ENCODE measurements at regions of chr19 and their contacts with region 1.

Region 1: GRCh38 chr19:48363810-48364563 is at the starts of genes SYNGR4 and TMEM143:
- DNase-seq: peak; percentile 98
- H3K4me3 ChIP-seq: peak within 1 kb of the TSS; percentile 40 to 43
- H3K27ac ChIP-seq: peak within 1 kb of the TSS; percentile 90 to 92
- H3K4me1 ChIP-seq: peaks cover 3% of the 10 kb centered on the region
- H3K27me3 ChIP-seq: no peaks in the 10 kb centered on the region
- CTCF ChIP-seq: peak in 1 of 4 experiments; percentile 30
- POLR2A ChIP-seq: peak; percentile 43
- total RNA-seq, gene SYNGR4: 2.8 TPM in 1 of 2 donors, not detected in the other
- total RNA-seq, gene TMEM143: 4.6 to 14.9 TPM

Region 2: DNA sequence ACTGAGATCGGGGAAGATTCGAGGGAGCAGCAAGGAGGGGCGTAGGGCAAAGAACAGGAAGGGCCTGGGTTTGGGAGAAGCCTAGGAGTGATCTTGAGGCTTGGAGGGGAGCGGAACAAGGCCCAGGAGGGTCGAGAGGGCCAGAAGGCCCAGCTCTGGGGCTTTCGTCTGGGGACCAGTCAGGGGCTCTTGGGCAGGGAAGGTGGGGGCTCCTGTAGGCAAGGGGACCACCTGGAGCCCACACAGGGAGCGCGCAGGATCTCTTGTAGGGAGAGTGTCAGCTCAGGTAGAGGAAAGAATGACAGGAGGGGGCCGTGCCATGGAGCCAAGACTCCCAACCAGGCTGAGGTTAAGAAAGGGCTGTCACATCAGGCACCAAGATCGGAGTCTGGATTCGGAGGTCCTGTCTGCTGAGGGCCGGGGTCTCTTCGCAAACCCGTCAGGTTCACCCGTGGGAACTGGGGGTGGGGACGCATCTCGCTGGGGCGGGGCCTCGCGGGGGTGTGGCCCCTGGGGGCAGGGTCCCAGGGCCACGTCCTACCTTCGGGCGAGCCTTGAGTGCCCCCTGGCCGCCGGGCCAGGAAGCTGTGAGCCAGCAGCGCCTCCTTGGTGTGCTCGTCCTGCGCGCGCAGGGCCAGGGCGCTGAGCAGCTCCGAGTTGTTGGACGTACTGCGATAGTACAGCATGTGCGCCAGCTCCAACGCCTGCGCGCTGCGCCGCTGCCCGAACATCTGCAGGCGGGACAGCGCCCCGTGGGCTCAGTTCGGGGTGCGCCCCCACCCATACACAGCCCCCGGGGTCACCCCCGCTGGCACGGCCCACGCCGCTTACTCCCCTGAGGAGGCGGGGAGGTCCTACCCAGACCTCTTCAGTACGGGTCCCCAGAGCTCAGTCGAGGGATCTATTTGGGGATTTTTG is 30.3 kb before region 1 on chr19:
- intact Hi-C with region 1: loop called (anchors 2 kb)
- DNase-seq: peak; percentile 86
- H3K4me3 ChIP-seq: peak overlapping the region; percentile 23 to 35
- H3K27ac ChIP-seq: peak overlapping the region; percentile 89 to 97
- H3K4me1 ChIP-seq: peaks cover 6% of the 10 kb centered on the region
- H3K27me3 ChIP-seq: no peaks in the 10 kb centered on the region
- CTCF ChIP-seq: peak; percentile 58 to 95 (median 84)
- POLR2A ChIP-seq: no peak

Region 3: DNA sequence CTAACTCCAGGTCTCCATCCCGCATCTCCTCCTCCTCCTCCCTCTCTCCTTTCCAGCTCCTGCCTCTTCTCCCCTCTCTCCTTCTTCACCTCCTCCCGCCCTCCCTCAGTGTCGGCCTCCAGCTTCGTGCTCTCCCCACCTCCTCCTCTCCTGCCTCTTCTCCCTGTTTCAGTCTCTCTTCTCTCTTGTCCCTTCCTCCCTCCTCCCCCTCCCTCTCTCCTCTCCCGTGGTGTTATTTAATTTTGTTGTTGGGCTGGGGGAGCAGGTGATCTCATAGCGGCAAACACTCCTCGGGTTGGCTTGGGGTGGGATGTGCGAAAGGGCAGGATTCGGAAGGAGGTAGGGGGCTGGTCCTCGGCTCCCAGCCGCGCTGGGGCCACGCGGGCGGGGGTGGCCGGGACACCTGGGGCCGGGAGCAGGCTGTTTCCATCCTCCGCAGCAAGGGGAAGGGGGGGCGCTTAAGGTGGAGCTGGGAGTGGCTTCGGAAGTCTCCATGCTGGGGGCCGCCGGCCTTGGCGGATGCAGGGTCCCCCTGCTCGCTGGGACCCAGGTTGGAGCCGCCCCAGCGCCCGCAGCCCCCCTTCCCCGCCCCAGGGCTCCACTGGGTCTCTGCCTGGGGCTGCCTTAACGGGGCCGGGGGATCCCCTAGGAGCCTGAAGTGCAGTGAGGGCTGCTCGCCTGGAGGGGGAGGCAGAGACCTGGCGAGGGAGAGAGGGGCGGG is 282.2 kb after region 1 on chr19 and contains the start of gene CA11:
- intact Hi-C with region 1: no loop called
- DNase-seq: peak; percentile 78
- H3K4me3 ChIP-seq: peak within 1 kb of the TSS; percentile 41 to 44
- H3K27ac ChIP-seq: peak within 1 kb of the TSS; percentile 90 to 93
- H3K4me1 ChIP-seq: peaks cover 7% of the 10 kb centered on the region
- H3K27me3 ChIP-seq: no peaks in the 10 kb centered on the region
- CTCF ChIP-seq: peak; percentile 85 to 95 (median 88)
- POLR2A ChIP-seq: peak; percentile 49
- total RNA-seq, gene CA11: 7.0 to 11.2 TPM